CD8-positive, alpha-beta memory T cell (primary cell): ENCODE measurements at regions of chr15 and their contacts with region 1.

Region 1: DNA sequence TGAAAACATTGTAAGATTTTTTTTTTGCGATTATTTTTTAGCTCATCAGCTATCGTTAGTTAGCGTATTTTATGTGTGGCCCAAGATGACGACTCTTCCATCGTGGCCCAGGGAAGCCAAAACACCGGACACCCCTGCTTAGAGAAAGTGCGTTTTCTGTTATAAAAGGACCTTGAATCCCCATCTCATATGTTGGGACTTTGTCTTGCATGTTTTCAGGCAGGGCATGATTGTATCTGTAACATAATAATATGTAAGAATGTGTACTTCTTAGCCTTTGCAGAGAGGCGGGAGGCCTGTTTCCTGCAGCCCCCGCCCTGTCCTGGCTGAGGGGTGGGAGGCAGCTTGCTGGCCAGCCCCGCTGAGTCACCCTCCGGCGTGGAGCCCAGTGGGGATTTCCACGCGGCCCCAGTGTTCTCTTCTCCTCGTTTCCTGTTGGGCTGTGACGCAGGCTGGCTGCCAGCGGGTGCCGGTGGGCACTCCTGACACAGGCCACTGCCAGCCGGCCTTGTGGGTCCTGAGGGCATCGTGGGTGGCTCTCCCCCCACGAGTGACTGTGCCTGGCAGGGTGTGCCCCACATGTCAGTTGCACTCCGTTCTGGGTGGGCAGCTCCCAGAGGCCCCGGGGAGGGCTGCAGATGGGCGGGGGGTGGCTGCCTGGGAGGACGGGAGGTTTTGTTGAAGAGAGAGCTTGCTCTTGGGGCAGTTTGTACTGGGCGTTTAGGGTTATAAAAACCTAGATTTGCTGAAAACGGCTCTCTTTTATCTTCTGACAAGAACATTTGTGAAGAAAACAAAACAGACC is 55.6 kb downstream of the SMAD3 start:
- DNase-seq: peak; percentile 71 to 93 (median 88)
- H3K4me3 ChIP-seq: peak overlapping the region; percentile 26
- H3K4me3 Mint-ChIP-seq: peak overlapping the region; percentile 55 to 90 (median 84)
- H3K27ac ChIP-seq: peak overlapping the region; percentile 64
- H3K27ac Mint-ChIP-seq: peak overlapping the region; percentile 89 to 100 (median 98)
- H3K4me1 ChIP-seq: peaks cover 65% of the 10 kb centered on the region
- H3K4me1 Mint-ChIP-seq: peaks cover 87 to 98% (median 93%) of the 10 kb centered on the region in 3 donors
- H3K27me3 ChIP-seq: no peaks in the 10 kb centered on the region
- H3K27me3 Mint-ChIP-seq: peaks cover 0 to 2% of the 10 kb centered on the region in 2 donors

Region 2: GRCh38 chr15:66981771-66982170 is 139.3 kb before region 1 on chr15:
- CTCF ChIA-PET with region 1: no interaction called
- POLR2A ChIA-PET with region 1: interaction called, 10 read pairs
- DNase-seq: no peak
- H3K4me3 ChIP-seq: no peak overlapping the region
- H3K4me3 Mint-ChIP-seq: no peak overlapping the region
- H3K27ac ChIP-seq: no peak overlapping the region
- H3K27ac Mint-ChIP-seq: no peak overlapping the region
- H3K4me1 ChIP-seq: no peaks in the 10 kb centered on the region
- H3K4me1 Mint-ChIP-seq: peaks cover 0 to 1% (median 0%) of the 10 kb centered on the region in 3 donors
- H3K27me3 ChIP-seq: peaks cover 2% of the 10 kb centered on the region
- H3K27me3 Mint-ChIP-seq: peaks cover 8 to 38% of the 10 kb centered on the region in 2 donors

Region 3: GRCh38 chr15:67080900-67081431 is 40.1 kb before region 1 on chr15:
- CTCF ChIA-PET with region 1: interaction called, 12 read pairs
- POLR2A ChIA-PET with region 1: interaction called, 5 read pairs
- DNase-seq: peak in 1 of 5 donors; percentile 60
- H3K4me3 ChIP-seq: no peak overlapping the region
- H3K4me3 Mint-ChIP-seq: peak overlapping the region; percentile 21 to 84 (median 64)
- H3K27ac ChIP-seq: no peak overlapping the region
- H3K27ac Mint-ChIP-seq: peak overlapping the region; percentile 89 to 96 (median 92)
- H3K4me1 ChIP-seq: peaks cover 91% of the 10 kb centered on the region
- H3K4me1 Mint-ChIP-seq: peaks cover 94 to 98% (median 97%) of the 10 kb centered on the region in 3 donors
- H3K27me3 ChIP-seq: no peaks in the 10 kb centered on the region
- H3K27me3 Mint-ChIP-seq: no peaks in the 10 kb centered on the region

Region 4: GRCh38 chr15:67101911-67102598 is 19.0 kb before region 1 on chr15:
- CTCF ChIA-PET with region 1: interaction called, 5 read pairs
- POLR2A ChIA-PET with region 1: interaction called, 25 read pairs
- DNase-seq: peak in 3 of 5 donors; percentile 20 to 83 (median 72)
- H3K4me3 ChIP-seq: peak overlapping the region; percentile 37
- H3K4me3 Mint-ChIP-seq: no peak overlapping the region
- H3K27ac ChIP-seq: peak overlapping the region; percentile 47
- H3K27ac Mint-ChIP-seq: no peak overlapping the region
- H3K4me1 ChIP-seq: peaks cover 98% of the 10 kb centered on the region
- H3K4me1 Mint-ChIP-seq: peaks cover 27 to 65% (median 27%) of the 10 kb centered on the region in 3 donors
- H3K27me3 ChIP-seq: no peaks in the 10 kb centered on the region
- H3K27me3 Mint-ChIP-seq: no peaks in the 10 kb centered on the region

Region 5: DNA sequence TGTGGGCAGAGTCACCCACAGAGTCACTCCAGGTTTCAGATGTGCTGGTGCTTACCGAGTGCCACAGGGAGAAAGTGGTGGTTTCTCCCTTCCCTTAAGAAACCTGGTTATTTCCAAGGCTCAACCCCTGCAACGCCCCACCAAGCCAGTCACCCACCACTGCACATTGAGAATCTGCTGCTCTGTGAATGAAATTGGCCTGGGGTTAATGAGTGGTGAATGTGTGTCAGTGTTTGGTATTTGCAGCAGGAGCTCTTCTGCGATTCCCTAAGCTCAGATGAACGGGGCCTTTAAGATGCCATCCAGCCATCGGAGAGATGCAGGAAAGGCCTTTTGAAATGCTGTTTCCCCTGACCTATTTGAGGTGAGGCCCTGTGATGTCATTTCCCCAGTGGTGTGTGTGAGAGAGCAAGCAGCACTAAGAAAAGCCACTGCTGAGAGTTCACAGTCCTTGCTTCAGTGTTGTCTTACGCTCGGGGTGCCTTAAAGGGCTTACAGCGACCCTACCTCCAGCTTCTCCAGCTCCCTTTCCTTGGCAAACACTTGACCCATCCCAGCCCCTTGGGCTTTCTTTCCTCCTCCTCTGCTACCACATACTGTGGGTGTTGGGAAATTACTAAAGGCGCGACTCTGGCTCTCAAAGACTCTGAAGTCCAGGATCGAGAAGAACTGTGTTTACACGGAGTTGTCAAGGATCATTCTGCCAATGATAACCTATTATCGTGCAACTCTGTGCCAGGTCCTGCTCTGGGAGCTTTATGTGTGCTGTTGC is 13.2 kb after region 1 on chr15:
- CTCF ChIA-PET with region 1: interaction called, 15 read pairs
- POLR2A ChIA-PET with region 1: interaction called, 14 read pairs
- DNase-seq: peak; percentile 44 to 81 (median 73)
- H3K4me3 ChIP-seq: peak overlapping the region; percentile 38
- H3K4me3 Mint-ChIP-seq: peak overlapping the region; percentile 73 to 92 (median 85)
- H3K27ac ChIP-seq: peak overlapping the region; percentile 55
- H3K27ac Mint-ChIP-seq: peak overlapping the region; percentile 92 to 100 (median 98)
- H3K4me1 ChIP-seq: peaks cover 86% of the 10 kb centered on the region
- H3K4me1 Mint-ChIP-seq: peaks cover 90 to 100% (median 99%) of the 10 kb centered on the region in 3 donors
- H3K27me3 ChIP-seq: no peaks in the 10 kb centered on the region
- H3K27me3 Mint-ChIP-seq: no peaks in the 10 kb centered on the region

Region 6: DNA sequence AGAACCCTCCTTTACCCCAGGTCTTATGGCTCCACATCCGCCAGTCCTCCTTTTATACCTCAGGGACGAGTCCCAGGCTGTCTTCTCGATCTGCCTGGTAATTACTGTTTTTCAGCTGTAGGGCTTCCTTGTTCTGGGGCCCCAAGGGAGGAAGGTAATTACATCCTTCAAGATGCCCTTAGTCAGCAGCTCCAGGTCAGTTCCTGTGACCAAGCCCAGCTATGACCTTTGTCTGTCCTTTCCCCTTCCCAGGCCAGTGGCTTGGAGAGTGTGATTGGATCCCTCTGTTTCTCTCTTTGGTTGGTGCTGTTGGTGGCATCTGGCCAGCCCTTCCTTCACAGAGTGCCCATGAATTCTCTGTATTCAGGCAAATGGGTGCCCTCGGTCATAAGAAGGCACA is 40.8 kb after region 1 on chr15:
- CTCF ChIA-PET with region 1: no interaction called
- POLR2A ChIA-PET with region 1: no interaction called
- DNase-seq: no peak
- H3K4me3 ChIP-seq: no peak overlapping the region
- H3K4me3 Mint-ChIP-seq: no peak overlapping the region
- H3K27ac ChIP-seq: no peak overlapping the region
- H3K27ac Mint-ChIP-seq: peak overlapping the region in 5 of 8 donors; percentile 1 to 83 (median 43)
- H3K4me1 ChIP-seq: peaks cover 16% of the 10 kb centered on the region
- H3K4me1 Mint-ChIP-seq: peaks cover 49 to 63% (median 58%) of the 10 kb centered on the region in 3 donors
- H3K27me3 ChIP-seq: no peaks in the 10 kb centered on the region
- H3K27me3 Mint-ChIP-seq: no peaks in the 10 kb centered on the region